BJ (cell line): ENCODE measurements at regions of chr11 and their contacts with region 1.

Region 1: DNA sequence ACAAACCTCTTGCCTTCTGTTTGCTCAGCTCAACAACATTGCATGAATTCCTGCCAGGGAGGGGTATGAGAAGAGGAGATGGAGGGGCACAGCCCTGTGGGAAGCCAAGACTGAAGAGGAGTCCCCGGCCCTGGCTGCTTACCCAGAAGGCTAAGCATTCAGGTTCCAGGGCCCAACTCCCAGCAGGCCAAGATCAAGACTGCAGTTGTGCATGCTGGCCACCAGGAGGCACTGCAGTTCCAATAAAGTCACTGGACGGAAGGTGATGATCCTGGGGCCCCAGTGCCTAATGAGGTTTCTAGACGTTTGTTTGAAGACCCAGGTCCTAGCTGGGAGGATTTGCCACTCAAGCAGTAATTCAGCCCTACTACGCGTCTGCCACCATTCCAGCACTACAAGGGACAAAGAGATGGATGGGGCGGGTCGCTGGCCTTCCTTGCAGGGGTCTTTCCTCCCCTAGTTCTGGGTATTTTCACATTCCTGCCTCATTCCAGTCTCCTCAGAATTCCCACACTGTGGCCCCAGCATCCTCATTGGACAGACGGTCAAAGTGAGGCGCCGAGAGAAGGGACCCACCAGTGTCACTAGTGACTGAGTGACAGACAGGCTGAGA is 23.6 kb downstream of the ALX4 start:
- DNase-seq: no peak
- H3K4me3 ChIP-seq: no peak overlapping the region
- H3K27me3 ChIP-seq: no peaks in the 10 kb centered on the region
- CTCF ChIP-seq: peak; percentile 94

Region 2: DNA sequence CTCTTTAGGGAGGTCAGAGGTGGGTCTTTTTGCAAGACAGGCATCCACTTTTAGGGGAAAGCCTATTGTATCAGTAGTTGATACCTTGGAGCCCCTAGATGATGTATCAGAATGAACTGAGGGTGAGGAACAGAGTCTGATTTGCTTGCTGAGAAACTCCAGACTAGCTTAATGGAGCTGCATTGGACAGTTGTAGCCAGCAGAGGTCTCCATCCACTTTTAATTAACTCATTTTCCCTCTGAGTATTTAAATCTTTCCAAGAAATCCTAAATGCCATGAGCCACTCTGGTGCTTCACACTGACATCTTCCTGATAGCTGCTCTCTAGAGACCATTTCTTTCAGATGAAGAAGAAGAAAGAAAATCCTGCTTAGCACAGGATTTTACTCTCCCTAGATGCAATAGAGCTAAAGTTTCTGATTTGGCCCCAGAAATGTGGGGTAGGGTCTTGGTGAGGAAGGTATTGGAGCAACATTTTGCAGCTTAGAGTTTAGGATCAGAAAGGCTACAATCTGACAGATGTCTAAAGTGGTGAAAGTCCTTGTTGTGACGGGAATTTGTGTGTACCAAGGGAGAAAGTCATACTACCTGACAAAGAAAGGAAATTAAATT is 152.9 kb before region 1 on chr11:
- CTCF ChIA-PET with region 1: interaction called, 27 read pairs
- POLR2A ChIA-PET with region 1: no interaction called
- DNase-seq: no peak
- H3K4me3 ChIP-seq: no peak overlapping the region
- H3K27me3 ChIP-seq: no peaks in the 10 kb centered on the region
- CTCF ChIP-seq: peak; percentile 75

Region 3: DNA sequence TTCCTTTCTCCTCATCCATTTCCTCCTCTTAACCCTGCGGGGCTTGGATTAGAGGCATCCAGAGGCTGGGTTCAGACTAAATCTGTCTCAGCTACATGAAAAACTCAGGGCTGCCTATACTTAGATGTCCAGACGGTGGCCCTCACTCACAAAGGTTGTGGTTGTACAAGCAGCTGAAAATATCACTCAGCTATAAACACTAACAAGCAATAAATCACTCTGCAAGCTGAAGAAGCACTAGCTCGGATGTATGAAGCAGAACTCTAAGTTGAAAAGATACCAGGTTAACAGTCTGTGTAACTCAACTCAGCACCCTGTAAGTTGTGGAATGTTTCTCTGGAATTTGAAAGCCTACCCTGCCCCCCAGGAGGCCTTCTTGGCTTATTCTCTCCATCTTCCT is 108.0 kb before region 1 on chr11:
- CTCF ChIA-PET with region 1: interaction called, 13 read pairs
- POLR2A ChIA-PET with region 1: no interaction called
- DNase-seq: peak; percentile 23
- H3K4me3 ChIP-seq: no peak overlapping the region
- H3K27me3 ChIP-seq: no peaks in the 10 kb centered on the region
- CTCF ChIP-seq: peak; percentile 36

Region 4: GRCh38 chr11:44269369-44270351 is 16.7 kb before region 1 on chr11:
- CTCF ChIA-PET with region 1: interaction called, 16 read pairs
- POLR2A ChIA-PET with region 1: no interaction called
- DNase-seq: no peak
- H3K4me3 ChIP-seq: no peak overlapping the region
- H3K27me3 ChIP-seq: no peaks in the 10 kb centered on the region
- CTCF ChIP-seq: no peak

Region 5: GRCh38 chr11:44324749-44325525 is 38.6 kb after region 1 on chr11:
- CTCF ChIA-PET with region 1: interaction called, 13 read pairs
- POLR2A ChIA-PET with region 1: no interaction called
- DNase-seq: no peak
- H3K4me3 ChIP-seq: no peak overlapping the region
- H3K27me3 ChIP-seq: peaks cover 22% of the 10 kb centered on the region
- CTCF ChIP-seq: no peak

Region 6: GRCh38 chr11:44452827-44453572 is 166.6 kb after region 1 on chr11:
- CTCF ChIA-PET with region 1: no interaction called
- POLR2A ChIA-PET with region 1: no interaction called
- DNase-seq: no peak
- H3K4me3 ChIP-seq: no peak overlapping the region
- H3K27me3 ChIP-seq: peaks cover 4% of the 10 kb centered on the region
- CTCF ChIP-seq: no peak

Region 7: GRCh38 chr11:44538375-44539054 is 252.1 kb after region 1 on chr11:
- CTCF ChIA-PET with region 1: interaction called, 30 read pairs
- POLR2A ChIA-PET with region 1: no interaction called
- DNase-seq: no peak
- H3K4me3 ChIP-seq: no peak overlapping the region
- H3K27me3 ChIP-seq: peaks cover 2% of the 10 kb centered on the region
- CTCF ChIP-seq: peak; percentile 90

Region 8: DNA sequence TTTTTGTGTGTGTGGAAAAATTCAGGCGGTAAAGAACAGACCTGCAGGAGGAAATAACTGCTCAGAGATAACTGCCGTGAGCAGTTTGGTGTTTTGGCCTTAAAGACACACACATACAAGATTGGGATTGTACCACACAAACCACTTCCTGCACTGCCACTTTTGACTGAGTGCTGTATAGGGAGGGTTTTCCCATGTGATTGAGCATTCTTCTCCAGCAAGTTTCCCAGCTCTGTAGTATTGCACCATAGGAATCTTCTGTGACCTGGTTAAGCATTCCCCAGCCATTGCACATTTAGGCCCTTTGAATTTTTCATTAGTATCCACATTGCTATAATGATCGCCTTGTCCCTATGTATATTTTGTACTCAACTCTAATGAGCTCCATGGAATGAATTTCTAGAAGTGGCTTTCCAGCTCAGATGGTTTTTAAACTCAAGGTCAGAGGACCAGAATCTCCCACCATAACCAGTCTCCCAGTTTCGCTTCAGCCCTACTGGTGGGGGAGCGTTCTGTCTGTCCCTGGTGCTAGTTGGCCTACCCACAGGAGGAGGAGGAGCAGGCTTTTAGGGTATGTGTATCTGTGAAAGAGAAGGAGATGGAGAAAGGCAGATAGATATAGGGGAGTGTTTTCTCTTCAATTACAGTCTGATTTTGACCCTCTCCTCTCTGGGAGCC is 288.4 kb after region 1 on chr11:
- CTCF ChIA-PET with region 1: no interaction called
- POLR2A ChIA-PET with region 1: no interaction called
- DNase-seq: peak; percentile 82
- H3K4me3 ChIP-seq: no peak overlapping the region
- H3K27me3 ChIP-seq: no peaks in the 10 kb centered on the region
- CTCF ChIP-seq: no peak